GM12878 (cell line): ENCODE measurements at regions of chr5 and their contacts with region 1.

Region 1: GRCh38 chr5:133848341-133848811 is 120.0 kb downstream of the C5orf15 start:
- DNase-seq: no peak
- ATAC-seq: no peak
- H3K4me3 ChIP-seq: no peak overlapping the region
- H3K27ac ChIP-seq: no peak overlapping the region
- H3K4me1 ChIP-seq: peaks cover 11% of the 10 kb centered on the region
- H3K27me3 ChIP-seq: no peaks in the 10 kb centered on the region
- CTCF ChIP-seq: no peak
- EP300 ChIP-seq: no peak
- POLR2A ChIP-seq: no peak
- RAD21 ChIP-seq: no peak

Region 2: DNA sequence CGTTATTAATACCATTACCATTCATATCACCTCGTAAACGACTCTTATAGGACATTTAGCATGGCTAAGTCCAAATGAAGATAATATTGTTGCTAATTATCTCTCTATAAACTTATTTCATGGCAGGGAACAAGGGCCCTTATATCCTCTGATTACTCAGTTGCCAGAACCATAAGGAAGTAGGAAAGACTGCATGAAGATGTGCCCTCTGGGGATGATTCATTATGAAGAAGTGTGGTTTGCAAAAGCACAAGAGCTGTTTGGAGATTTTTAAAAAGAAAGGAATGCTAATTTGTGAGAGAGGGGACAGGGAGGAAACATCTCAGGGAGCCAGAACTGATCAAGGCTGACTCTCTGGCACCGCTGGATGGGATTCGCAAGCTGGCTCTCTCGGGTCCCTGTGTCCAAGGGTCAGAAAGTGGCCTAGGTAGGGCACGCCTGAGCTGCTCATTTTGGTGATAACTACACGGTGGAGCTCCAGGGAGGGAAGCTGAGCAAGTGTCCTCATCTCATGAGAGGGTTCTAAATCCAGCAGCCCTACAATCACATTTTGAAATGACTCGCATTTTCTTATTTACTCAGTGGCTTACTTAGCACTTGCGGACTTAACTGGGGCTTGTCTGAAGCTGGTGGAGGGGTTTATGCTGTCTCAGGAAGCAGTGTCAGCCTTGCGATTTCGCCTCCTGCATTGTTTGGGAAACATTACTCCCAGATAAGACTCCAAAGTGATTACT is 16.7 kb before region 1 on chr5:
- CTCF ChIA-PET with region 1: interaction called, 6 read pairs
- POLR2A ChIA-PET with region 1: interaction called, 3 read pairs
- RAD21 ChIA-PET with region 1: no interaction called
- SMC1A ChIA-PET with region 1: interaction called, 18 read pairs
- in situ Hi-C with region 1: no loop called
- intact Hi-C with region 1: no loop called
- DNase-seq: no peak
- ATAC-seq: peak; percentile 43
- H3K4me3 ChIP-seq: no peak overlapping the region; the same call in 1 of the 2 replicates
- H3K27ac ChIP-seq: no peak overlapping the region
- H3K4me1 ChIP-seq: peaks cover 6% of the 10 kb centered on the region; the same call in 1 of the 2 replicates
- H3K27me3 ChIP-seq: no peaks in the 10 kb centered on the region
- CTCF ChIP-seq: no peak
- EP300 ChIP-seq: no peak
- POLR2A ChIP-seq: no peak
- RAD21 ChIP-seq: no peak

Region 3: DNA sequence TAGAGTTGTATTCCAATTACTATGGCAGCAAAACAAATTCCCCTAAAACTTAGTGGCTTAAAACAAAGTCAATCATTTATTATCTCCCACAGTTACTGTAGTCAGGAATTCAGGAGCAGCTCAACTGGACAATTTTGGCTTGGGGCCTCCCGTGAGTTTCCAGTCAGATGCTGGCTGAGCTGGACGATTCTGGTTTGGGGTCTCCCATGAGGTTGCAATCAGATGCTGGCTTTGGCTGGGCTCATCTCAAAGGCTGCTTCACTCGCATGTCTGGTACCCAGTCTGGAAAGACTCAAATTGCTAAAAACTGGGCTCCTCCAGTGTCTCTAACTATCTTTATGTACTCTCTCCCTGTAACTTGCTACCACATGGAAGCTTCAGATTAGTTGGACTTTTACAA is 10.1 kb before region 1 on chr5:
- CTCF ChIA-PET with region 1: interaction called, 3 read pairs
- POLR2A ChIA-PET with region 1: no interaction called
- RAD21 ChIA-PET with region 1: no interaction called
- SMC1A ChIA-PET with region 1: interaction called, 12 read pairs
- in situ Hi-C with region 1: no loop called
- intact Hi-C with region 1: no loop called
- DNase-seq: no peak
- ATAC-seq: no peak
- H3K4me3 ChIP-seq: no peak overlapping the region
- H3K27ac ChIP-seq: no peak overlapping the region
- H3K4me1 ChIP-seq: no peaks in the 10 kb centered on the region
- H3K27me3 ChIP-seq: no peaks in the 10 kb centered on the region
- CTCF ChIP-seq: no peak
- EP300 ChIP-seq: no peak
- POLR2A ChIP-seq: no peak
- RAD21 ChIP-seq: no peak

Region 4: DNA sequence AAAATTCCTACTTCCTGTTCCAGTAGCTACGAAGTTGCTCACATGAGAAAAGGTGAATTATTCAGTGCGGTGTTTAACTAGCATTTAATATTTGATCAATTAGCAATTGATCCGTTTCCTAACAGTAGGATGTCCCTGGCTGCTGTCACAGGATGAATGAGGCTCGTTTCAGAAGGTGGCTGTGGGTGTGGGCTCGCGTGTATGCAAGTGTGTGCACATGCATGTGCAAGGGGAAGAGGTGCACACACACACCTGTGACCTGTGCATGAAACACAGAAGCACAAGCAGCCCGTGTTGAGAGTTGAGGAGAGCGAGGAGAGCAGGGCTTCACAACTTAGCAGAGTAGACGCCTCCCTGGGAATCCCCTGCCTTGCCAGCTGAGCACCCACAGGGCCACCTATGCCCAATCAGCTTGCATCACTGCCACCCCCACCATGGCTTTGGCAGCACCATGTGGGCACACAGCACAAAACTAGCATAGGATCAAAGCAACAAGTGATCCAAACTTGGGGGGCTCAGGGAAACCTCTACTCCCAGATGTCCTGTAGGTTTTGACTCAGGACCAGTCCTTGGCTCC is 12.9 kb after region 1 on chr5:
- CTCF ChIA-PET with region 1: interaction called, 12 read pairs
- POLR2A ChIA-PET with region 1: interaction called, 3 read pairs
- RAD21 ChIA-PET with region 1: no interaction called
- SMC1A ChIA-PET with region 1: interaction called, 6 read pairs
- in situ Hi-C with region 1: no loop called
- intact Hi-C with region 1: no loop called
- DNase-seq: no peak
- ATAC-seq: peak; percentile 93
- H3K4me3 ChIP-seq: no peak overlapping the region
- H3K27ac ChIP-seq: no peak overlapping the region
- H3K4me1 ChIP-seq: peaks cover 4% of the 10 kb centered on the region
- H3K27me3 ChIP-seq: no peaks in the 10 kb centered on the region; a peak in 1 of 4 replicates
- CTCF ChIP-seq: no peak
- EP300 ChIP-seq: no peak
- POLR2A ChIP-seq: no peak
- RAD21 ChIP-seq: no peak

Region 5: DNA sequence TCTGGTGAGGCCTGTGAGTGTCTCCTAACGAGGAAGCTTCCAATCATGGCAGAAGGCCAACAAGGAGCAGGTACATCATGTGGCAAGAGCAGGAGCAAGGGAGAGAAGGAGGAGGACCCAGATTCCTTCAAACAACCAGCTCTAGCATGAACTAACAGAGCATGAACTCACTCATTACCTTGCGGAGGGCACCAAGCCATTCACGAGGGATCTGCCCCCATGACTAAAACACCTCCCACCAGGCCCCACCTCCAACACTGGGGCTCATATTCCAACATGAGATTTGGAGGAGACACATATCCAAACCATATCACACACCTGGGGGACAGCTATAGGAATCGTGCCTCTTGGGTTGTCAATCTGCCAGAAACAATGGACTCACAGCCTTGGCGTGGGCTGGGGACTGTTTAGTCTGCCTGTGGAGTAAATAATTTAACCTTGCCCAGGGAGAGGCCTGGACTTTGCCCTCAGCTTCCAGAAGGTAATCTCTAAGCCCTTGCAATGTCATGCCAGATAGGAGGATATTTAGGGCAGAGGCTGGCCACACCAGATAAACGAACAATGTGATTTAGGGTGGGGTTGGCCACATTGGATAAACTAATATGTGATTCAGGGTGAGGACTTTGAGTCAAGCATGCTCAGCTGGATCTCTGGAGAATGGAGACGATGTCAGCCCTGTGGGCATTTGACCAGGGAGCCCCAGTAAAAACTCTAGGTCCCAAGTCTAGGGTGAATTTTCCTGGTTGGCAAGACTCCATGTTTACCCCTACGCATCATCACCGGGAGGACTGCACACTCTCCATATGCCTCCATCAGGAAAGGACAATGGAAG is 170.0 kb after region 1 on chr5:
- CTCF ChIA-PET with region 1: no interaction called
- POLR2A ChIA-PET with region 1: no interaction called
- RAD21 ChIA-PET with region 1: no interaction called
- SMC1A ChIA-PET with region 1: no interaction called
- in situ Hi-C with region 1: no loop called
- intact Hi-C with region 1: no loop called
- DNase-seq: no peak
- ATAC-seq: no peak
- H3K4me3 ChIP-seq: no peak overlapping the region
- H3K27ac ChIP-seq: no peak overlapping the region
- H3K4me1 ChIP-seq: no peaks in the 10 kb centered on the region
- H3K27me3 ChIP-seq: no peaks in the 10 kb centered on the region; a peak in 1 of 4 replicates
- CTCF ChIP-seq: no peak
- EP300 ChIP-seq: no peak
- POLR2A ChIP-seq: no peak
- RAD21 ChIP-seq: no peak